ENCODE measurements at regions of chr16 and their contacts with region 1.

Region 1: DNA sequence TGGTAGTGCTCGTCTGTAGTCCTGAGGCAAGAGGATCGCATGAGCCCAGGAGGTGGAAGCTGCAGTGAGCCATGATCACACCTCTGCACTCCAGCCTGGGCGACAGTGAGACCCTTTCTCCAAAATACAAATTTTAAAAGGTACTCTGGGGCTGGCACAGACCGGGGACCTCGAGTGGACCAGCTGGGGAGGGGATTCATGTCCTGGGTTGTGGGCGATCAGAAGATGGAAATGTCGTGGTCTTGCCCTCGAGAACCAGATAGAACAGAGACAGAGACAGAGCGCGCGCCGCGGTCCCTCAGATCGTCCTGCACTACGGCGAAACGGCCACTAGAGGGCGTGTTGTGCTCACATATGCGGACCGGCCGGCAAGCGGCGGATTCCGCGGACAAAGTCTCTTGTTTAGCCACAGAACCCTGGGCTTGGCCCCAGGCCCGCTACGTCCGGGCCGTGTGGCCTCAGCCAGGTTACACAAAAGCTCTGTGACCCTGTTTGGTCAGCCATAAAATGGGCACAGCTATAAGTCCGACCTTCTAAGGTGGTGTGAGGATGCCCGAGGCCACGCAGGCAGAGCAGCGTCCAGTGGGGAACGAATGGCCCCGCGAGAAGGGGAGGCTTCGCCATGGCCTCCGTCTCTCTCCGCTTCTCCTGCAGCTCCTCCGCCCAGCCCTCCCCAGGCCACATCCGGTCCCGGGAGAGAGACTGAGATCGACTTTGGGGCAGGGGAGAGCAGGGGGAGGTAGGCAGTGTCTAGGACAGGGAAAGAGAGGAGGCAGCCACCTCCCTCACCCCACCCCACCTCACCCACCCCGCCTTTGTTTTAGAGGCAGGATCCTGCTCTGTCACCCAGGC is 14.6 kb upstream of the SBK1 start:
- DNase-seq: peak; percentile 89 to 96
- ATAC-seq: peak; percentile 95
- H3K4me3 ChIP-seq: no peak overlapping the region
- H3K27ac ChIP-seq: no peak overlapping the region
- H3K4me1 ChIP-seq: no peaks in the 10 kb centered on the region
- H3K27me3 ChIP-seq: no peaks in the 10 kb centered on the region

Region 2: GRCh38 chr16:28211712-28212534 is 65.8 kb before region 1 on chr16 and contains the start of gene XPO6:
- intact Hi-C with region 1: loop called in 1 of 2 experiments (anchors 10 kb)
- DNase-seq: peak; percentile 97 to 100
- ATAC-seq: peak; percentile 97
- H3K4me3 ChIP-seq: peak within 1 kb of the TSS; percentile 85 to 93
- H3K27ac ChIP-seq: peak within 1 kb of the TSS; percentile 10 to 14
- H3K4me1 ChIP-seq: no peaks in the 10 kb centered on the region
- H3K27me3 ChIP-seq: no peaks in the 10 kb centered on the region
- total RNA-seq, gene XPO6: 88.6 to 103 TPM

Region 3: DNA sequence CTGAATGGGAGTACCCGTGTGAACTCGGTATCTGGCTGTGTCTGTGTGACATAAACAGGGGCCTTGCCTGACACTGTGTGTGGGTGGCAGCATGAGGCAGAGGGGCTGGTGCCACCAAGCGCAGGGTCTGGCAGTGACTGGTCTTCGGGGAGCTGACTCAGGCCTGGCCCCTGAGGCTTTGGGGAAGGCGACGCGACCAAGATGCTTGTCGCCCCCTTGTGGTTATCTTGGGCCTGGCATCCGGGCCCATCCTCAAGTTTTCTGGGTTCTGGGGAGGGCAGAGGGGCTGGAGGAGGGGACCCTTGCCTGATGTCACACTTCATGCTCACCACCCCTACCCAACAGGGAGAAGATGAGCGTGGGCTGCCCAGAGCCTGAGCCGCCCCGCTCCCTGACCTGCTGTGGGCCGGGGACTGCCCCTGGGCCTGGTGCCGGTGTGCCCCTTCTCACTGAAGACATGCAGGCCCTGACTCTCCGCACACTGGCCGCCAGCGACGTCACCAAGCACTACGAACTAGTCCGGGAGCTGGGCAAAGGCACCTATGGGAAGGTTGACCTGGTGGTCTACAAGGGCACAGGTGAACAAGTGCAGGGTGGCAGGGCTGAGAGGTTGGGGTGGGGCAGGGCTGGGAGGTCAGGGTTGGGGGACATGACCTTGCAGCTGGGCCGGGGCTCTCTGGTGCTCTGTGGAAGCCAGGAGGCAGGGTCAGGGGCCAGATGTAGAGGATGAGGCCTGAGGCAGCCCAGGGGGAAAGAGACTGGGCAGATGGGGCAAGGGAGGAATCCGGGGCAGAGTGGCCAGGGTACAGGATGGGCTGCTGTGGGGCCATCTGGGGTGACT is 39.5 kb after region 1 on chr16:
- intact Hi-C with region 1: loop called (anchors 1 to 5 kb)
- DNase-seq: peak; percentile 70 to 87
- ATAC-seq: no peak
- H3K4me3 ChIP-seq: no peak overlapping the region
- H3K27ac ChIP-seq: no peak overlapping the region
- H3K4me1 ChIP-seq: no peaks in the 10 kb centered on the region
- H3K27me3 ChIP-seq: no peaks in the 10 kb centered on the region

Region 4: DNA sequence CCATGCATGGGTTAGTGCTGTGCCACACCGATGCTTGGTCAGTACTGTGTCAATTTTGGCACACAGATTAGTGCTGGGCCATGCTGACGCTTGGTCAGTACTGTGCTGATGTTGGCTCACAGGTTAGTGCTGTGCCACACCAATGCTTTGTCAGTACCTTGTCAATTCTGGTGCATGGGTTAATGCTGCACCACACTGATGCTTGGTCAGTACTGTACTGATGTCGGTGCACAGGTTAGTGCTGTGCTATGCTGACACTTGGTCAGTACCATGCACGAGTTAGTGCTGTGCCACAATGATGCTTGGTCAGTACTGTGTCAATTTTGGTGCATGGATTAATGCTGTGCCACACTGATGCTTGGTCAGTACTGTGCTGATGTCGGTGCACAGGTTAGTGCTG is 1025.8 kb after region 1 on chr16:
- intact Hi-C with region 1: no loop called
- DNase-seq: peak in 1 of 2 donors; percentile 4
- ATAC-seq: no peak
- H3K4me3 ChIP-seq: no peak overlapping the region
- H3K27ac ChIP-seq: no peak overlapping the region
- H3K4me1 ChIP-seq: no peaks in the 10 kb centered on the region
- H3K27me3 ChIP-seq: no peaks in the 10 kb centered on the region

Measured in aorta (tissue), 5 donors.